Activated CD4-positive, alpha-beta memory T cell treated with anti-CD3 and anti-CD28 coated beads, Interleukin-2, amount 10 ng/mL, durations not matched to agents 7 days and 5 days (primary cell): ENCODE measurements at regions of chr7 and their contacts with region 1.

Region 1: GRCh38 chr7:134646425-134647305 is at the start of gene BPGM:
- DNase-seq: peak; percentile 97
- H3K4me3 Mint-ChIP-seq: no peak within 1 kb of the TSS
- H3K27ac Mint-ChIP-seq: no peak within 1 kb of the TSS
- H3K4me1 Mint-ChIP-seq: peaks cover 45% of the 10 kb centered on the region
- H3K27me3 Mint-ChIP-seq: no peaks in the 10 kb centered on the region
- total RNA-seq, gene BPGM: 27.3 to 29.3 TPM

Region 2: GRCh38 chr7:134307320-134307719 is 339.3 kb before region 1 on chr7:
- CTCF ChIA-PET with region 1: no interaction called
- POLR2A ChIA-PET with region 1: no interaction called
- DNase-seq: no peak
- H3K4me3 Mint-ChIP-seq: no peak overlapping the region
- H3K27ac Mint-ChIP-seq: no peak overlapping the region
- H3K4me1 Mint-ChIP-seq: peaks cover 10% of the 10 kb centered on the region
- H3K27me3 Mint-ChIP-seq: no peaks in the 10 kb centered on the region

Region 3: GRCh38 chr7:134660961-134661376 is 14.3 kb after region 1 on chr7:
- CTCF ChIA-PET with region 1: interaction called, 6 read pairs
- POLR2A ChIA-PET with region 1: interaction called, 57 read pairs
- DNase-seq: no peak
- H3K4me3 Mint-ChIP-seq: no peak overlapping the region
- H3K27ac Mint-ChIP-seq: no peak overlapping the region
- H3K4me1 Mint-ChIP-seq: peaks cover 38% of the 10 kb centered on the region
- H3K27me3 Mint-ChIP-seq: no peaks in the 10 kb centered on the region

Region 4: DNA sequence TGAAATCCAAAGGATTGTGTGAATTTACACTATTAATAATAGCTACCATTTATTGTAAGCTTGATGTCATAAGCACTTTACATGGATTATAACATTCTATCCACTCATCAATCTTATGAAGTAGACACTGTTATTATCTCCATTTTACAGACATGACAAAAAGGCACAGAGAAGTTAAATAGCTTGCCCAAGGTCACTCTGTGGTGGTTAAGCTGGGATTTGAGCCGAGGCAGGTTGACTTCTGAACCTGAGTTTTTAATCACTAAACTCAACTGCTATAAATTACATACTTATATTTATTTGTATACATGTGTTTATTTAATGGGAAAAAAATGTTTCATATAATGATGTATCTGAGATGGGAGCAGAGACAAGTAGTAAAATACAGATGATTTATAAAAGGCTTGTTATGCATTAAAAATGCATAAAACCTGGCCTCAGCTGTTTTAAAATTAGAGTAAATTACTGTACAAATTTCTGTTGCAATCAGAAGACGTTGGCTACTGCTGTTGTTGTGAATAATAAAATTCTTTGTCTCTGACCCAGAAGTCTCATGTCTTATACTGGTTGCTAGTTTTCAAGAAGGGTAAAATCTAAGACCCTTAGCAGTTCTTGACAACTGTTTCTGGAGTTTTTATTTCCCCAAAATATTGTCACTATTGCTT is 71.7 kb after region 1 on chr7:
- CTCF ChIA-PET with region 1: no interaction called
- POLR2A ChIA-PET with region 1: no interaction called
- DNase-seq: no peak
- H3K4me3 Mint-ChIP-seq: no peak overlapping the region
- H3K27ac Mint-ChIP-seq: no peak overlapping the region
- H3K4me1 Mint-ChIP-seq: peaks cover 3% of the 10 kb centered on the region
- H3K27me3 Mint-ChIP-seq: peaks cover 2% of the 10 kb centered on the region

Region 5: DNA sequence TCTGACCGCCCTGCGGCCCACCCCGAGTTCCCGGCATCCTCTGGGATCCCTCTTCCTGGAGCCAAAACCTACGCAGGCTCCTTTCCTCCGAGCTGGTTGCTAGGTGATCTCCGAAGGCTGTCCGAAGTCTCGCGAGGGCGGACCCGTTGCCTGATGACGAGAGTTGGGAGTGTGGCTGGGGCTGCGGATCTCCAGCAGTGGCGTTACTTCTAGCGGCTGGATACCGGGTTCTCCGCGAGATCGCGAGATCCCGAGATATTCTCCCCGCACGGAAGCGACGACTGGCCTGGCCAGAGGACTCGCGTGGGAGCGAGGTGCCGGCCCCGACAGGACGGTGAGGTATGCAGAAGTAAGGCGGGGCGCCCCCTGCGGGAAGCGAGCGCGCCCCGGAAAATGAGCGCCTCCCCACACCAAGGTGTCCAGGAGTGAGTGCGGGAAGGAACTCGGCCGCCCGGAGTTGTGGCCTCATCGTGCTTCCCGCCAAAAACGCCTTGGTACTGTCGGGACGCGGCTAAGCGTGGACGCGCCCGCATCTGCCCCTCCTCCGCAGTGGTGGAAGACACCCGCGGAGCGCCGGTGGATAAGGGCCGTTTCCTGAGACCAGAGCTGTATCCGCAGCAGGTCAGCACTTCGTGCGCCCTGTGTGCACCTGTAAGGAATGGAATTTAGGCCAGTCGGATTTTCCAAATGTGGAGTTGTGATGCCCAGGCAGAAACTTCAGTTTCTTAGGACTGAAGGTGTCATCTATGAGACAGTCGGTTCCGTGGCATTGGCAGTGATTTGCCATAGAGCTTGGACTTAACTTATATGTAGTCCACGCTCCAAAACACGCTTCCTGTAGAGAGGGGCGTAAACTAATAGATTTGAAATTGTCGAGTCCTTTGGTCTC is 339.9 kb after region 1 on chr7 and contains the start of gene AGBL3:
- CTCF ChIA-PET with region 1: interaction called, 7 read pairs
- POLR2A ChIA-PET with region 1: interaction called, 11 read pairs
- DNase-seq: peak; percentile 94
- H3K4me3 Mint-ChIP-seq: peak within 1 kb of the TSS; percentile 98
- H3K27ac Mint-ChIP-seq: peak within 1 kb of the TSS; percentile 90
- H3K4me1 Mint-ChIP-seq: peaks cover 34% of the 10 kb centered on the region
- H3K27me3 Mint-ChIP-seq: no peaks in the 10 kb centered on the region
- total RNA-seq, gene AGBL3: 2.8 to 3.4 TPM

Region 6: GRCh38 chr7:135170274-135170997 is 523.8 kb after region 1 on chr7 and contains the start of gene CYREN:
- CTCF ChIA-PET with region 1: interaction called, 11 read pairs
- POLR2A ChIA-PET with region 1: interaction called, 6 read pairs
- DNase-seq: peak; percentile 90
- H3K4me3 Mint-ChIP-seq: peak within 1 kb of the TSS; percentile 87
- H3K27ac Mint-ChIP-seq: peak within 1 kb of the TSS; percentile 93
- H3K4me1 Mint-ChIP-seq: peaks cover 51% of the 10 kb centered on the region
- H3K27me3 Mint-ChIP-seq: no peaks in the 10 kb centered on the region
- total RNA-seq, gene CYREN: 32.0 to 32.1 TPM